MCF 10A (cell line): ENCODE measurements at regions of chr5 and their contacts with region 1.

Region 1: DNA sequence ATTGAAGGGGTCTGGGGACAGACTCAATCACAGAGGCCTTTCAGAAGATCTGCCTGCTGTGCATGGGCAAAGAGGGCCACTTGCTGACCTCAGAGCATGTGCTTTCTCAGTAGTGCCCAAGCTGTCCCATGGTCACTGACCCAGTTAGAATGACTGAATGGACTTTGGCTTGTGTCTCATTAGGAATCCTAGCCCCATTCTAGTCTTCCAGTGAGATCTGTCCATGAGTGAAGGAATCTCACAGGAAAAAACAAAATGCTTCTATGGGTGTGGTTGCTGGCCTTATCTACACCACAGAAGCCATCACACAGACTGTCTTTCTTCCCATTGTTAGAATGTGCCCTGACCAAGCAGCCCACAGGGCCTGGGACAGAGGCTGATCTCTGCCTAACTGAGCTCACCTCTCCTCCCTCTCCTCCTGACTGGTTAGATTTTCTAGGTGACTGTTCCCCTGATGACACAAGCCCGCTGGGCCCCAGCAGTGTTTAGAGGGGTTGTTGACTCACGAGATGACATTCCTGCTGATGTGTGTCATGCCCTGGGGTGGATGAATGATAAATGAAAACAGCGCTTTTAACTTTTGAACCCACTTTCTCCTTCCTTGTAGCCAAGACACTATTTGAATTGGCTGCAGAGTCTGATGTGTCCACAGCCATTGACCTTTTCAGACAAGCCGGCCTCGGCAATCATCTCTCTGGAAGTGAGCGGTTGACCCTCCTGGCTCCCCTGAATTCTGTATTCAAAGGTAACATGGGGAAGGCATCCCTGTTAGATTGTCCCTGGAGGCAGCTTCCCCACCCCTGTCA is 24.8 kb downstream of the TGFBI start:
- DNase-seq: peak; percentile 98
- H3K4me3 Mint-ChIP-seq: no peak overlapping the region
- H3K27ac Mint-ChIP-seq: peak overlapping the region; percentile 85
- H3K4me1 Mint-ChIP-seq: peaks cover 52% of the 10 kb centered on the region
- H3K27me3 Mint-ChIP-seq: no peaks in the 10 kb centered on the region
- CTCF ChIP-seq: no peak

Region 2: DNA sequence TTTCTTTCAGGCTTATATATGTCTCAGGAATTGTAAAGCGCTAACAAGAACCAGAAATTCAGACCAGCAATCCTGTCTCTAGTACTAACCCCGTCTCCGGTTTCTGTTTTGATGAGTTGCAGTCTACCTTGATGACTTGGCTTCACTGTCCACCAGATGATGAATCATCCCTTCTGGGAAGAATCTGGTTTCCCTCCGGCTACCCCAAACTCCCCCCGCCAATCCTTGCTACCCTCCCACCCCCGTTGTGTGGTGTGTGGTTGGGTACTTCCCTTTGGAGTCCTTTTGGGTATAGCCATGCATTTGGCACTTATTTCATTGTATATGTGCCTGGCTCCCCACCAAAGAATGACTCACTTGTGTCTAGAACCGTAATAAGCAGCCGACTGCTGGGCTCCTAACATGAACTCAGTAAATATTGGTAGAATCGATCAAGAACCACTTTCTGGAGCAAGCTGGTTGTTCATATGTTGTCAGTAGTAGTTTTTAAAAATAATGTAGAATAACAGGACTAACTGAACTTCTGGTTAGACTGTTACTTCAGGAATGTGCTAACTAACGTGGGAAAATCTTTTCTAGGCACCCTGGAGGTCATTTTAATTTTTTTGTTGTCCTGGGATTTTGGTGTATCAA is 33.0 kb before region 1 on chr5:
- CTCF ChIA-PET with region 1: interaction called, 3 read pairs
- POLR2A ChIA-PET with region 1: interaction called, 364 read pairs
- intact Hi-C with region 1: no loop called
- DNase-seq: peak; percentile 100
- H3K4me3 Mint-ChIP-seq: peak overlapping the region; percentile 49
- H3K27ac Mint-ChIP-seq: peak overlapping the region; percentile 63
- H3K4me1 Mint-ChIP-seq: peaks cover 61% of the 10 kb centered on the region
- H3K27me3 Mint-ChIP-seq: no peaks in the 10 kb centered on the region
- CTCF ChIP-seq: no peak